Caco-2 (cell line): ENCODE measurements at regions of chr6 and their contacts with region 1.

Region 1: GRCh38 chr6:96304997-96305396 is 216.6 kb upstream of the UFL1 start:
- DNase-seq: no peak
- H3K4me3 ChIP-seq: no peak overlapping the region
- H3K4me3 Mint-ChIP-seq: no peak overlapping the region
- H3K27ac Mint-ChIP-seq: no peak overlapping the region
- H3K4me1 ChIP-seq: peaks cover 17% of the 10 kb centered on the region
- H3K4me1 Mint-ChIP-seq: peaks cover 24% of the 10 kb centered on the region
- H3K27me3 ChIP-seq: no peaks in the 10 kb centered on the region
- H3K27me3 Mint-ChIP-seq: no peaks in the 10 kb centered on the region
- CTCF ChIP-seq: no peak

Region 2: GRCh38 chr6:96194675-96195074 is 110.3 kb before region 1 on chr6:
- CTCF ChIA-PET with region 1: no interaction called
- POLR2A ChIA-PET with region 1: no interaction called
- intact Hi-C with region 1: loop called (anchors 1 kb)
- DNase-seq: no peak
- H3K4me3 ChIP-seq: no peak overlapping the region
- H3K4me3 Mint-ChIP-seq: no peak overlapping the region
- H3K27ac Mint-ChIP-seq: peak overlapping the region; percentile 60
- H3K4me1 ChIP-seq: peaks cover 18% of the 10 kb centered on the region
- H3K4me1 Mint-ChIP-seq: peaks cover 20% of the 10 kb centered on the region
- H3K27me3 ChIP-seq: no peaks in the 10 kb centered on the region
- H3K27me3 Mint-ChIP-seq: no peaks in the 10 kb centered on the region
- CTCF ChIP-seq: no peak

Region 3: GRCh38 chr6:96286503-96286902 is 18.5 kb before region 1 on chr6:
- CTCF ChIA-PET with region 1: no interaction called
- POLR2A ChIA-PET with region 1: interaction called, 5 read pairs
- intact Hi-C with region 1: loop called (anchors 1 kb)
- DNase-seq: no peak
- H3K4me3 ChIP-seq: no peak overlapping the region
- H3K4me3 Mint-ChIP-seq: no peak overlapping the region
- H3K27ac Mint-ChIP-seq: peak overlapping the region; percentile 79
- H3K4me1 ChIP-seq: peaks cover 38% of the 10 kb centered on the region
- H3K4me1 Mint-ChIP-seq: peaks cover 23% of the 10 kb centered on the region
- H3K27me3 ChIP-seq: no peaks in the 10 kb centered on the region
- H3K27me3 Mint-ChIP-seq: no peaks in the 10 kb centered on the region
- CTCF ChIP-seq: no peak

Region 4: GRCh38 chr6:96468681-96469224 is 163.8 kb after region 1 on chr6:
- CTCF ChIA-PET with region 1: no interaction called
- POLR2A ChIA-PET with region 1: no interaction called
- intact Hi-C with region 1: loop called (anchors 10 kb)
- DNase-seq: no peak
- H3K4me3 ChIP-seq: no peak overlapping the region
- H3K4me3 Mint-ChIP-seq: no peak overlapping the region
- H3K27ac Mint-ChIP-seq: no peak overlapping the region
- H3K4me1 ChIP-seq: peaks cover 7% of the 10 kb centered on the region; the same call in 1 of the 2 replicates
- H3K4me1 Mint-ChIP-seq: no peaks in the 10 kb centered on the region
- H3K27me3 ChIP-seq: no peaks in the 10 kb centered on the region
- H3K27me3 Mint-ChIP-seq: no peaks in the 10 kb centered on the region
- CTCF ChIP-seq: peak; percentile 19 to 33

Region 5: GRCh38 chr6:96521644-96522464 is 216.9 kb after region 1 on chr6 and contains the start of gene UFL1:
- CTCF ChIA-PET with region 1: no interaction called
- POLR2A ChIA-PET with region 1: no interaction called
- intact Hi-C with region 1: loop called (anchors 2 kb)
- DNase-seq: peak; percentile 93 to 94
- H3K4me3 ChIP-seq: peak within 1 kb of the TSS; percentile 85
- H3K4me3 Mint-ChIP-seq: peak within 1 kb of the TSS; percentile 93
- H3K27ac Mint-ChIP-seq: peak within 1 kb of the TSS; percentile 99
- H3K4me1 ChIP-seq: peaks cover 18% of the 10 kb centered on the region
- H3K4me1 Mint-ChIP-seq: peaks cover 6% of the 10 kb centered on the region
- H3K27me3 ChIP-seq: no peaks in the 10 kb centered on the region
- H3K27me3 Mint-ChIP-seq: no peaks in the 10 kb centered on the region
- CTCF ChIP-seq: no peak
- total RNA-seq, gene UFL1: 19.4 and 21.9 TPM in 2 replicates